Psoas muscle (tissue), 8 donors: ENCODE measurements at regions of chr7 and their contacts with region 1.

Region 1: DNA sequence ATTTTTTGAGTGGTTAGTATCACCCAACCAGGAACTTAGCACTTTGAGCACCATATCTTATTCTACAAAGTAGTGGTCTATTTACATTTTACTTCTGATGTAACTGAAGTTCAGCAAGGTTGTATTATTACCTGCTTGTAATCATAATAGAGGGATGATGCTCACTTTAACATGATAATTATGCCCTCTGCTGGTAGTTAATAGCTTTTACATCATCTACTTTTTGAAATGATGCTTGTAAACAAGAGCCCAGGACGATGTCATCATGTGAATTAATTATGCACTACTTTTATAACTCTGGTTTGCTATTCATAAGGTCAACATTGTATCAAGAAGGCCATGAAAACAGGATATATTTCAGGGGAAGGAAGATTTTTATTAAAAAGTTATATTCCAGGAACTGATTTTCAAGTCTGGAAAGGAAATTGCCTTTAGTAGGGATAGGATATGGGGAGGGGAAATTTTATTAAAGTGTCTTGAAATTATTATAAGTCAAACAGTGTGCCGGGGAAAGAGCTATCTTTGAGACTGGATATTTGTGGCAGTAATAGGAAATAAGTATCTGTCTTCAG is 80.3 kb upstream of the SCIN start:
- DNase-seq: no peak
- ATAC-seq: no peak
- H3K4me3 ChIP-seq: no peak overlapping the region
- H3K27ac ChIP-seq: no peak overlapping the region
- H3K4me1 ChIP-seq: no peaks in the 10 kb centered on the region
- H3K27me3 ChIP-seq: no peaks in the 10 kb centered on the region
- CTCF ChIP-seq: peak; percentile 31

Region 2: DNA sequence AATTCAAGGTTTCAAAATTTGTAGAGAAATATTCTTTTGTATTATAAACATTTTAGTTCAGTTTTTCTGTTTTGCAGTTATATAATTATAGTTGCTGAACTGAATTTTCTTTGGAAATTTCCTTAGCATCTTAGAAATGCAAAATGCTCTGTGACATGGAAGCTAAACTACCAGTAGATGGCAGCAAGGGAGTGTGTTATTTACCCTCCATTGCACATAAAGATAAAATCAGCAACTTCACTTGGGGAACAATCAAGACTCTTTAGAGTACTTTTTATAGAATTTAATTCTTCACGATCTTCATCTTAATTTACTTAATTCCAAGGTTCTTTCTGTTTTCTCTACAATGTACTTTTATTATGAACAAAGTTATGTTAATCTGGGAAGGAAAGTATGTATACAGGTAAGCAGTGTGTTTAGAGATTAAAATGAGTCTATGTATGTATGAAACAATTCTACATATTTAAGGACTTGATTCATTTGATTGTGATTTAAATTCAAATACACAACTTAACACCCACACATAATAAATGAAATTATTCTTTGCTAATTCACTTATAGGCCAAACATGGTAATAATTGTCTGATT is 1062.4 kb before region 1 on chr7:
- intact Hi-C with region 1: loop called (anchors 5 kb)
- DNase-seq: no peak
- ATAC-seq: no peak
- H3K4me3 ChIP-seq: no peak overlapping the region
- H3K27ac ChIP-seq: no peak overlapping the region
- H3K4me1 ChIP-seq: no peaks in the 10 kb centered on the region
- H3K27me3 ChIP-seq: no peaks in the 10 kb centered on the region
- CTCF ChIP-seq: peak; percentile 63

Region 3: DNA sequence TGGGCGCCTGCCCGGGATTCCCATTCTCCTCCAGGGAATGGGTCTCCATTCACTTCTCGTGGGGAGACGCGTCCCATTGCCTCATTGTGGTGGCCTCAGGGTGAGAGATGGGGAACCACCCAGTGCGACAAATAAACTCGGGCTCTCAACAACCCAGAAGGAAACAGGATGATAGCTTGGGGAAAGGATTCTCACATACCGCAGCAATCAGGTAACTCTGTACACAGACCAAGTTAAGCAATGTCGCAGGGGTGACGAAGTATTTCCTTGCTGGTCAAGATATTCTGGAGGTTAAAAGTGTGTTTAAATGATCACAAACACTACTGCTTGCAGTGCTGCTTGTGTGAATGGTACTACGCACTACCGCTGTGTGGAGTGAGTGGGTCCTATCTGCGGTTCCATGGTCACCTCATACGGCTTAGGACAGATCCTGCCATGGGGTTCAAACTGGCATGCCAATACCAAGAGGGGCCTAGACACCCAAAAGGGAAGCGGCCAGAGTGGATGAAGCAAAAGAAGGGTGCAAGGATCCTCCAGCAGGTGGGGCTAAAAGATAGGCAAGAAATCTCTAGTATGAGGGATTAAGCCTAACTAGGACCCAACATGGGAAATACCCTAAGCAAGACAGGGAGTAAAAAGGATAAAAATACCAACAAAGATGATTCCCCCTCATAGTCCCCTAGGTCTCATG is 422.9 kb before region 1 on chr7:
- intact Hi-C with region 1: loop called in 1 of 2 experiments (anchors 5 kb)
- DNase-seq: no peak
- ATAC-seq: peak in 3 of 4 donors; percentile 45 to 54 (median 50)
- H3K4me3 ChIP-seq: no peak overlapping the region
- H3K27ac ChIP-seq: no peak overlapping the region
- H3K4me1 ChIP-seq: no peaks in the 10 kb centered on the region
- H3K27me3 ChIP-seq: no peaks in the 10 kb centered on the region
- CTCF ChIP-seq: peak; percentile 46

Region 4: GRCh38 chr7:12557282-12557681 is 67.1 kb after region 1 on chr7:
- intact Hi-C with region 1: no loop called
- DNase-seq: no peak
- ATAC-seq: no peak
- H3K4me3 ChIP-seq: no peak overlapping the region
- H3K27ac ChIP-seq: no peak overlapping the region
- H3K4me1 ChIP-seq: no peaks in the 10 kb centered on the region
- H3K27me3 ChIP-seq: no peaks in the 10 kb centered on the region
- CTCF ChIP-seq: no peak

Region 5: GRCh38 chr7:12942609-12943008 is 452.4 kb after region 1 on chr7:
- intact Hi-C with region 1: no loop called
- DNase-seq: no peak
- ATAC-seq: no peak
- H3K4me3 ChIP-seq: no peak overlapping the region
- H3K27ac ChIP-seq: no peak overlapping the region
- H3K4me1 ChIP-seq: no peaks in the 10 kb centered on the region
- H3K27me3 ChIP-seq: no peaks in the 10 kb centered on the region
- CTCF ChIP-seq: no peak